ENCODE measurements at regions of chr15 and their contacts with region 1.

Region 1: DNA sequence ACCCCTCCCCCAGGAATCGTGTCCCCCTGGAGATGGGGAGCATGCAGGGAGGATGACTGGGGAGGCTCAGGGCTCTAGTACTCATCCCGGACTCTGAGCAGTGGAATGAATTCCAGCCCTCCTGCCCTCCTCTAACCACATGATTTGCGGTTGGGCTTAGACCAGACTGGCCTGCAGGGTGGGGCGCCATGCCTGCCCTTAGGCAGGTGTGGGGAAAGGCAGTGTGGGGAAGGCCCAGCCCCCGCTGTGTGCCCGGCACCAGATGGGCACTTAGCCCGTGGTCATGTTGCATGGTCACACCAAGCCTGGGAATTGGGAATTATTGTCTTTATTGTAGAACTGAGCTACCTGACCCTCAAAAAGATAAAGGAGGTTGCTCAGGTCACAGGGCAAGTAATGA is 283.8 kb downstream of the TLE3 start:
- DNase-seq: peak; percentile 72 to 86
- H3K4me3 ChIP-seq: no peak overlapping the region
- H3K27ac ChIP-seq: no peak overlapping the region
- H3K4me1 ChIP-seq: peaks cover 15% of the 10 kb centered on the region
- H3K27me3 ChIP-seq: no peaks in the 10 kb centered on the region
- CTCF ChIP-seq: no peak

Region 2: DNA sequence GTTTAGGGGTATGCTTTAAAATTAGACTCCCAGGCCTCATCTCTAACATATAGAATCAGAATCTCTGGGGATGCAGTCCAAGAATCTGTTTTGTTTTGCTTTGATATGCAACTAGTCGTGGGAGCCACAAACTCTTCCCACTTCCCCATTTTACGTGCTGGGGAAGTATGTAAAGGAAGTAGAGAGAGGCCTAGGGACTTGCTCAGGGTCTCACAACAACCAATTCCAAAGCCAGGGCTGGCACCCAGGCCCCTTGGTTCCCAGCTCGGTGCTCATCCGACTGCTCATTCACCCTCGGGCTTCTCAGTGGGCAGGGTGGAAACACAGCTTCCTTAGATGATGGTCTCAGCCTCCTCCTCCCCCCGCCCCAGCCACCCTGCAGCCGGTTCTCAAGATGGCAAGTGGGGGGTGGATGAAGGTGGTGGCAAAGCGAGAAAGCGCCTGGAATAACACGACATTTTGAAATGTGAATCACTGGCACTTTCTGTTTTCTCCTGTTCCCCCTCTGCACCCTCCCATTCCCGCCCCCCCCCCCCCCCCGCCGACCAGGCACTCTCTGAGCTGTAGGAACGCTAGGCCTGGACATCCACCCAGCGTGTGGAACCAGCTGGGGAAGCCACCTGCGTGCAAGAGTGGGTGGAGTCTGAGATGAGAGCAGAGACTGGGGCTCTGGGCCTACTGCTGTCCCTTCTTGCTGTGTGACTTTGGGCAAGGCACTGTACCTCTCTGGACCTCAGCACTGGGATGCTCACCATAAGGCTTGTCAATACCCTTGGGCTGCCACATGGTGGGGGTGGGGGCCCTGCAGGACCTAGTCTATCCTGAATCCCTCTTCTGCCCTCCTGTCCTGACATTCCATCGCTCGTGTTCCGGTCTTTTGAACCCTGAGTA is 146.7 kb before region 1 on chr15:
- CTCF ChIA-PET with region 1: interaction called, 10 read pairs
- POLR2A ChIA-PET with region 1: no interaction called
- intact Hi-C with region 1: no loop called
- DNase-seq: no peak
- H3K4me3 ChIP-seq: no peak overlapping the region
- H3K27ac ChIP-seq: no peak overlapping the region
- H3K4me1 ChIP-seq: peaks cover 15% of the 10 kb centered on the region
- H3K27me3 ChIP-seq: no peaks in the 10 kb centered on the region
- CTCF ChIP-seq: no peak

Measured in PC-9 (cell line).